ENCODE measurements at regions of chr17 and their contacts with region 1.

Region 1: GRCh38 chr17:3695723-3696411 is at the start of gene P2RX5:
- DNase-seq: peak in 8 of 9 donors; percentile 24 to 59 (median 35)
- ATAC-seq: peak; percentile 71
- H3K4me3 ChIP-seq: peak within 1 kb of the TSS; percentile 82
- H3K4me3 Mint-ChIP-seq: peak within 1 kb of the TSS; percentile 87 to 98 (median 94)
- H3K27ac ChIP-seq: peak within 1 kb of the TSS; percentile 61
- H3K27ac Mint-ChIP-seq: peak within 1 kb of the TSS in 8 of 9 donors; percentile 67 to 95 (median 86)
- H3K4me1 ChIP-seq: peaks cover 3 to 9% of the 10 kb centered on the region in 2 donors
- H3K4me1 Mint-ChIP-seq: peaks cover 5 to 39% (median 16%) of the 10 kb centered on the region in 7 donors
- H3K27me3 ChIP-seq: no peaks in the 10 kb centered on the region
- H3K27me3 Mint-ChIP-seq: no peaks in the 10 kb centered on the region
- total RNA-seq, gene P2RX5: 10.7 to 94.5 (median 24.6) TPM

Region 2: DNA sequence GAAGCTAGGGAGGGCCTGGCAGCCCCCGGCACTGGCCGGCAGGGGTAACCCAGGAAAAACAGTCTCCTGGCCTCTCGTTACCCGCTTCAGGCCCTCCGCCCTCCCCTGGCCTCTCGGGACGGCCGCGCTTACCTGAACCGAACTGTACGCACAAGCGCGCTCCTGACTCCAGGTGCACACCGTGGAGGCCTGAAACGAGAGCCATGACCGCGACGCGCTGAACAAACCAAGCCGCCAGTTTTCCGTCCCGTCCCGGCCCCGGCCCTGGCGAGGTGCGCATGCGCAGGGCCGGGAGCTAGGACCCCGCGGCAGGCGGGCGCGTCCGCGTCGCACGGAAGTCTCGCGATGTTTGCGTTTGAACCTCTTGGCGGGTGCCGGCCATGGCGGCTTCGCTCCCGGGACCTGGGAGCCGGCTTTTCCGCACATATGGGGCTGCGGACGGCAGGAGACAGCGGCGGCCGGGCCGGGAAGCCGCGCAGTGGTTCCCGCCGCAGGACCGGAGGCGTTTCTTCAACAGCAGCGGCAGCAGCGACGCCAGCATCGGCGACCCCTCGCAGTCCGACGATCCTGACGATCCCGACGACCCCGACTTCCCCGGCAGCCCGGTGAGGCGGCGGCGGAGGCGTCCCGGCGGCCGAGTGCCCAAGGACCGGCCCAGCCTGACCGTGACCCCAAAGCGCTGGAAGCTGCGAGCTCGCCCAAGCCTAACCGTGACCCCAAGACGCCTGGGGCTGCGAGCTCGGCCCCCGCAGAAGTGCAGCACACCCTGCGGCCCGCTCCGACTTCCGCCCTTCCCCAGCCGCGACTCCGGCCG is 27.9 kb after region 1 on chr17 and contains the start of gene HASPIN:
- CTCF ChIA-PET with region 1: interaction called, 5 read pairs
- POLR2A ChIA-PET with region 1: interaction called, 5 read pairs
- intact Hi-C with region 1: loop called (anchors 1 kb)
- DNase-seq: peak; percentile 85 to 97 (median 92)
- ATAC-seq: peak; percentile 92
- H3K4me3 ChIP-seq: peak within 1 kb of the TSS; percentile 77
- H3K4me3 Mint-ChIP-seq: peak within 1 kb of the TSS; percentile 84 to 95 (median 92)
- H3K27ac ChIP-seq: peak within 1 kb of the TSS; percentile 83
- H3K27ac Mint-ChIP-seq: peak within 1 kb of the TSS; percentile 65 to 94 (median 86)
- H3K4me1 ChIP-seq: peaks cover 7 to 24% of the 10 kb centered on the region in 2 donors
- H3K4me1 Mint-ChIP-seq: peaks cover 21 to 55% (median 39%) of the 10 kb centered on the region in 7 donors
- H3K27me3 ChIP-seq: no peaks in the 10 kb centered on the region
- H3K27me3 Mint-ChIP-seq: no peaks in the 10 kb centered on the region
- total RNA-seq, gene HASPIN: 0.32 to 18.5 (median 0.35) TPM

Measured in naive thymus-derived CD4-positive, alpha-beta T cell (primary cell).